ENCODE measurements at regions of chr19 and their contacts with region 1.

Region 1: GRCh38 chr19:4164262-4164661 is 10.8 kb downstream of the CREB3L3 start:
- DNase-seq: no peak
- ATAC-seq: no peak
- H3K4me3 ChIP-seq: no peak overlapping the region
- H3K27ac ChIP-seq: no peak overlapping the region
- H3K4me1 ChIP-seq: no peaks in the 10 kb centered on the region
- H3K27me3 ChIP-seq: peaks cover 8% of the 10 kb centered on the region; the same call in 1 of the 2 replicates
- CTCF ChIP-seq: no peak
- POLR2A ChIP-seq: no peak
- RAD21 ChIP-seq: no peak

Region 2: DNA sequence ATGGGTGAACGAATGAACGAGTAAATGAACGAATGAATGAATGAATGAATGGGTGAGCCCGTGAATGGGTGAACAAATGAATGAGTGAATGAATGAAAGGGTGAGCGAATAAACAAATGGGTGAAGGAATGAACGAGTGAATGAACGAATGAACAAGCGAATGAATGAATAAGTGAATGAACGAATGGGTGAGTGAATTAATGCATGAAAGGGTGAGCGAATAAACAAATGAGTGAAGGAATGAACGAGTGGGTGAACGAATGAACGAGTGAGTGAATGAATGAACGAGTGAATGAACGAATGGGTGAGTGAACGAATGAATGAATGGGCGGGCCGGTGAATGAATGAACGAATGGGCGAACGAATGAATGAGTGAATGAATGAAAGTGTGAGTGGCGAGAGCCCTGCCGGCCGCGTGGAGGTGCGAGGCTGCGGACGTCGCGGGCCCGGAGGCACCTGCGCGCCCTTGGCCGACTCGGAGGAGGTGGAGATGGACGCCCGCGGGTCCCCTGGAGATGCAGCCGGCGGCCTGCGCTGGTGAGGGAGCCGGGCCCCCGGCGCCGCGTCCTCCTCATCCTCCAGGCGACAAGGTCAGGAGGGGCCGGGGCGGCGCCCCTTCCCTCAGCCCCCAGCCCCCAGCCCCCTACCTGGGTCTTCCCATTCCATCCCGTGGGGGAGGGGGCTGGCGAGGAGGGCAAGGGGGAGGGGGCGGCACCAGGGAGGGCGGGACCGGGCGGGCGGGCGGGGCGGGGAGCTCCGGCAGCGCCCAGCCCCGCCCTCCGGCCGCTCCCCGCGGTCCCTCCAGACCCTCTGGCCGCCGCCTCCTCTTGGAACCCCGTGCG is 33.6 kb after region 1 on chr19:
- CTCF ChIA-PET with region 1: no interaction called
- POLR2A ChIA-PET with region 1: no interaction called
- dilution Hi-C with region 1: no loop called
- in situ Hi-C with region 1: no loop called
- intact Hi-C with region 1: no loop called
- DNase-seq: no peak
- ATAC-seq: no peak
- H3K4me3 ChIP-seq: no peak overlapping the region
- H3K27ac ChIP-seq: no peak overlapping the region
- H3K4me1 ChIP-seq: no peaks in the 10 kb centered on the region
- H3K27me3 ChIP-seq: peaks cover 62% of the 10 kb centered on the region
- CTCF ChIP-seq: no peak
- POLR2A ChIP-seq: no peak
- RAD21 ChIP-seq: no peak

Region 3: DNA sequence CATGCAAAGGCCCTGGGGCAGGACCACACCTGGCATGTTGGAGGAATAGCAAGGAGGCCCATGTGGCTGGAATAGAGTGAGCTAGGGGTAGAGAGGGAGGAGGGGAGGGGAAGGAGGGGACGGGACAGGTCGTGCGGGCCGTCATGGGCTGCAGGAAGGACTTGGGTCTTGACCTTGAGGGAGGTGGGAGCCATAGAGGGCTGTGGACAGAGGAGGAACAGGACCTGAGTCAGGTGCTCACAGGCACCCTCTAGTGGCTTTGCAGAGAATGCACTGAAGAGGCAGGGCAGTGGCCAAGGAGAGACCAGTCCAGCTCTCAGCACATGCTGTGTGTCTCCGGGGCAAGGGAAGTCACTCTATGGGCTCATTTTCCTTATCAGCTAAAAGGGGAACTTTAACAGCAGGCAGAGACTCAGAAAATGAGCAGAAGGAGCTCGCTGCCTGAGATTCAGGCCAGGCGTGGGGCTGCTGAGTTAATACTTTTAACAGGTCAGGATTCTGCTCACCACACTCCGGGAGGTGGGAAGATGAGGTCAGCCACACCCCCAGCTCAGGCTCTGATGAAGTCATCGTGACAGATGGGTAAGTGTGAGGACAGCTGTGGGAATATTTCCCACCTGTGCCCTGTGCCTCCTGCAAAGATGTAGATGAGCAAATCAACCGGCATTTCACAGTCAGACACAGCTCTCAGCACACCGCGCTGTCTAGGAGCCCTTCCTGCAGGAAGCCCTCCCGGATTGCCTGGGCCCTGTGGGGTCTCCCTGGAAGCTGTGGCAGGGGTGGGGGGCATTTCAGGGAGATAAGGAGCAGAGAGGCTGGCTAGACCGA is 469.1 kb after region 1 on chr19:
- CTCF ChIA-PET with region 1: no interaction called
- POLR2A ChIA-PET with region 1: interaction called, 16 read pairs
- dilution Hi-C with region 1: no loop called
- in situ Hi-C with region 1: no loop called
- intact Hi-C with region 1: no loop called
- DNase-seq: peak; percentile 85
- ATAC-seq: peak; percentile 54
- H3K4me3 ChIP-seq: no peak overlapping the region
- H3K27ac ChIP-seq: no peak overlapping the region
- H3K4me1 ChIP-seq: peaks cover 17% of the 10 kb centered on the region
- H3K27me3 ChIP-seq: no peaks in the 10 kb centered on the region
- CTCF ChIP-seq: peak; percentile 78
- POLR2A ChIP-seq: no peak
- RAD21 ChIP-seq: peak; percentile 53

Measured in IMR-90 (cell line).